Activated B cell treated with CpG ODN at 0.5 μM for 24 hours (primary cell): ENCODE measurements at regions of chr11 and their contacts with region 1.

Region 1: DNA sequence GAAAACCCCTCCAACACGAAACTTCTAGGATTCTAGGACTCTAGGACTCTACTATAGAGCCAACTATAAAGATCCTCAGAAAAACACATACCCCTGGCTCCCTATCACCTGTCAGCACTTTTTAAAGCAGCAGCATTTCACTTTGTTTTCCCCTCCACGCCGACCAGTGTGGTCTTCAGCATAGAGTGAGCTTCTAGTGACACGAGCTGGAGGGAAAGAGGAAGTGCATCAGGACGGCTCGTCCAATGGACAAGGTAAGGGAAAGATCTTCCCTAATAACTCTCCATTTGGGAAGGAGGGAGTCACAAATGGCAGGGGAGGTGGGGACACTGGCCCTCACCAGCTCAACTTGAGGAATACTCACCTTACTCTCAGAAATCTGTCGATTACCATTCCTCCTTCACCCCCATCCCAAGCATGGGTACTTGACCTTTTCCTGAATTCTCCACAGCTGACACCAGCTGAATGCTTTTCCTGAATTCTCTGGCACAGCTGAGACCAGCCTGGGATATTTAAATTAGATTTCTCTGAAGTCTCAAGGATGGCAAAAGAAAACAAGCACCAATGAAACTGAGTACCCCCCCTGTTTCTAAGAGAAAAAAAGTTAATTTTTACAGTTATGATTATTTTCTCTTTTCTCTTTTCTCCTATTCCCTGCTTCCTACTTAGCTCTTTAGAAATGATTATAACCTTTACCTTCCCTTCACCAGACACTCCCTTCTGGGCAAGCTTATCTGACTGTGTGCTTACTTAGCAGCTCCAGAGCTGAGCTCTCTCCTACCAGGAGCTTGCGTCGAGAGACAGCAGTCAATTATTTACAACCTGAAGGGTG is 33.3 kb upstream of the NNMT start:
- DNase-seq: no peak
- ATAC-seq: no peak
- H3K4me3 Mint-ChIP-seq: no peak overlapping the region
- H3K27ac Mint-ChIP-seq: no peak overlapping the region
- H3K4me1 Mint-ChIP-seq: peaks cover 31% of the 10 kb centered on the region
- H3K27me3 Mint-ChIP-seq: peaks cover 5% of the 10 kb centered on the region
- CTCF ChIP-seq: no peak

Region 2: DNA sequence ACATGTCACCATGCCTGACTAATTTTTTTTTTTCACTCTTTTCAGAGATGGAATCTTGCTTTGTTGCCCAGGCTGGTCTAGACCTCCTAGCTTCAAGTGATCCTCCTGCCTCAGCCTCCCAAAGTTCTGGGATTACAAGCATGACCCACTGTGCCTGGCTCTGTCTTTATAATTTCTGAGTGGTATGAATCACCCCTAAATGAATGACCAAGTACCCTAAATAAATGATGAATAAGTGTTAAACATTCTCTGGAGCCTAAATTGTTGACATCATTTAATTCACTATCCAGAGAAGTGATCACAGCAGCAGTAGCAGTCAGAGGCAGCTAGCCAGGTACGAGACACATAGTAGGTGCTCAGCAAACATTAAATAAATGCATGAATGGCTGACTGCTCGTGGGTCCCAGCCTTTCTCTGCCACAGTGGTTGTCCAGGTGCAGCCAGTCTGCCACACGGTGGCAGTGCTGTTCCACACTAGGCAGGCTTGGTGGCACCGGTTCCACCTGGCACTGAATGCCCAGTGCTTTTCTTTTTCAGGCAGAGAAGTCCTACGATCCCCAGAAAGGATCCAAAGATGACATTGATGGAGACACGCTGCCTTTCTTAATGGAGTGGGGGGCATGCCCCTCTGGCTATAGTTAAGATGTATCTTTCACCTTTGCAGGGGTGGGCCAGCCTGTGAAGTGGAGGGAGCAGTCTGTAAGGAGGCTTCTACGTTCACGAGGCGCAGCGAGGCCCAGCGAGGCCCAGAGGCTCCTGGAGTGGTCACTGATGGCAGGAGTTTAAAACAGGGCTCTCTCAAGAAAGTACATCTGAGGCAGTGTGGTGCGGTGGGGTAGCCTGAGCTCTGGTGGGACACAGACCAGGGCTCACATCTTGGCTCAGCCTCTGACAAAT is 957.2 kb before region 1 on chr11:
- CTCF ChIA-PET with region 1: interaction called, 12 read pairs
- POLR2A ChIA-PET with region 1: no interaction called
- intact Hi-C with region 1: loop called (anchors 1 kb)
- DNase-seq: peak; percentile 48
- ATAC-seq: peak; percentile 89
- H3K4me3 Mint-ChIP-seq: no peak overlapping the region
- H3K27ac Mint-ChIP-seq: no peak overlapping the region
- H3K4me1 Mint-ChIP-seq: no peaks in the 10 kb centered on the region
- H3K27me3 Mint-ChIP-seq: peaks cover 5% of the 10 kb centered on the region
- CTCF ChIP-seq: no peak

Region 3: DNA sequence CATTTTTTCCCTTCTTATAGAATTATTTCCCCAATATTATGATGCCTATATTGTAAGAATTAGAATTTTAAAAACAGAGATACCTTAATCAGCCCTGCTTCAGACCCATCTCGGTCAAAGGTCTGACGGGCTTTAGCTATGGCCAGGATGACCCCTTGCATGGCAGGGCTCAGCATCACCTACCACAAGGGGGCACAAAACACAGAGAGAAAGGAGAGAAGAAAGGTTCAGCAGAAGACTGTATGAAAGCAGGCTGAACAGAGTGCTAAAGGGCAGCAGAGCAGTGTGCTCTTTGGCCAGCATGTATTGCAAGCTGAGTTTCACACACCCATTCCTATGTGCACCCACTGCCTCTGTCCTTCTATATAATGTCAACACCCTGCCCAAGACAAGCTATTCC is 456.5 kb before region 1 on chr11:
- CTCF ChIA-PET with region 1: interaction called, 113 read pairs
- POLR2A ChIA-PET with region 1: no interaction called
- intact Hi-C with region 1: loop called (anchors 1 kb)
- DNase-seq: no peak
- ATAC-seq: peak; percentile 57
- H3K4me3 Mint-ChIP-seq: no peak overlapping the region
- H3K27ac Mint-ChIP-seq: no peak overlapping the region
- H3K4me1 Mint-ChIP-seq: peaks cover 1% of the 10 kb centered on the region
- H3K27me3 Mint-ChIP-seq: no peaks in the 10 kb centered on the region
- CTCF ChIP-seq: no peak

Region 4: DNA sequence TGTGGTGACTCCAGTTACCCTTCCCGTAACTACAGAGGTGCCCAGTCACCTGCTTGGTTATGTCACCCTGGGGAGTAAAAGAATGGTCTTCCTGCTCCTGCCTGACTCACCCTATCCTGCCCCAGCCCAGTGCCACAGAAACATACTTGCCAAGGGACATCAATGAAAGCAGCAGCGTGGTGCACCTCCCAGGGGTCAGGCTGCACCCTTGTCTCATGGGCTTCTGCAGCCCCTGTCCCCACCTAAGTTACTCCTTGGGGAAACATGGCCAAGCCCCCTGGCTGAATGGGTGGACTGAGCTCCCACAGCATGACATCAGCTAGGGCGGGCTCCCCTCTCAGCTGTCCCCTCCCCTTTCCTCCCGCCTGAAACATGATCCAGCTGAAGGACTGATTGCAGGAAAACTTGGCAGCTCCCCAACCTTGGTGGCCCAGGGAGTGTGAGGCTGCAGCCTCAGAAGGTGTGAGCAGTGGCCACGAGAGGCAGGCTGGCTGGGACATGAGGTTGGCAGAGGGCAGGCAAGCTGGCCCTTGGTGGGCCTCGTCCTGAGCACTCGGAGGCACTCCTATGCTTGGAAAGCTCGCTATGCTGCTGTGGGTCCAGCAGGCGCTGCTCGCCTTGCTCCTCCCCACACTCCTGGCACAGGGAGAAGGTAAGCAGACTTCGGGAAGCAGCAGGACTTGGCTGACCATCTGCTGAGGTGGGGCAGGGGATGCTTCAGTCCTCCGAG is 288.0 kb before region 1 on chr11 and contains the start of gene HTR3A:
- CTCF ChIA-PET with region 1: interaction called, 21 read pairs
- POLR2A ChIA-PET with region 1: interaction called, 16 read pairs
- intact Hi-C with region 1: loop called (anchors 5 kb)
- DNase-seq: no peak
- ATAC-seq: no peak
- H3K4me3 Mint-ChIP-seq: peak within 1 kb of the TSS; percentile 42
- H3K27ac Mint-ChIP-seq: peak within 1 kb of the TSS; percentile 50
- H3K4me1 Mint-ChIP-seq: peaks cover 64% of the 10 kb centered on the region
- H3K27me3 Mint-ChIP-seq: no peaks in the 10 kb centered on the region
- CTCF ChIP-seq: no peak
- total RNA-seq, gene HTR3A: 15.3 and 15.6 TPM in 2 replicates

Region 5: GRCh38 chr11:114036156-114036811 is 226.6 kb before region 1 on chr11:
- CTCF ChIA-PET with region 1: interaction called, 118 read pairs
- POLR2A ChIA-PET with region 1: no interaction called
- intact Hi-C with region 1: loop called (anchors 1 kb)
- DNase-seq: peak; percentile 37
- ATAC-seq: peak; percentile 86
- H3K4me3 Mint-ChIP-seq: no peak overlapping the region
- H3K27ac Mint-ChIP-seq: no peak overlapping the region
- H3K4me1 Mint-ChIP-seq: peaks cover 3% of the 10 kb centered on the region
- H3K27me3 Mint-ChIP-seq: peaks cover 15% of the 10 kb centered on the region
- CTCF ChIP-seq: no peak

Region 6: GRCh38 chr11:114180301-114181055 is 82.4 kb before region 1 on chr11:
- CTCF ChIA-PET with region 1: interaction called, 21 read pairs
- POLR2A ChIA-PET with region 1: interaction called, 6 read pairs
- intact Hi-C with region 1: no loop called
- DNase-seq: no peak
- ATAC-seq: peak; percentile 55
- H3K4me3 Mint-ChIP-seq: no peak overlapping the region
- H3K27ac Mint-ChIP-seq: peak overlapping the region; percentile 69
- H3K4me1 Mint-ChIP-seq: peaks cover 70% of the 10 kb centered on the region
- H3K27me3 Mint-ChIP-seq: no peaks in the 10 kb centered on the region
- CTCF ChIP-seq: no peak

Region 7: GRCh38 chr11:114317787-114318137 is 54.9 kb after region 1 on chr11:
- CTCF ChIA-PET with region 1: no interaction called
- POLR2A ChIA-PET with region 1: no interaction called
- intact Hi-C with region 1: no loop called
- DNase-seq: no peak
- ATAC-seq: no peak
- H3K4me3 Mint-ChIP-seq: no peak overlapping the region
- H3K27ac Mint-ChIP-seq: no peak overlapping the region
- H3K4me1 Mint-ChIP-seq: no peaks in the 10 kb centered on the region
- H3K27me3 Mint-ChIP-seq: peaks cover 38% of the 10 kb centered on the region
- CTCF ChIP-seq: no peak